ENCODE measurements at regions of chr16 and their contacts with region 1.

Region 1: DNA sequence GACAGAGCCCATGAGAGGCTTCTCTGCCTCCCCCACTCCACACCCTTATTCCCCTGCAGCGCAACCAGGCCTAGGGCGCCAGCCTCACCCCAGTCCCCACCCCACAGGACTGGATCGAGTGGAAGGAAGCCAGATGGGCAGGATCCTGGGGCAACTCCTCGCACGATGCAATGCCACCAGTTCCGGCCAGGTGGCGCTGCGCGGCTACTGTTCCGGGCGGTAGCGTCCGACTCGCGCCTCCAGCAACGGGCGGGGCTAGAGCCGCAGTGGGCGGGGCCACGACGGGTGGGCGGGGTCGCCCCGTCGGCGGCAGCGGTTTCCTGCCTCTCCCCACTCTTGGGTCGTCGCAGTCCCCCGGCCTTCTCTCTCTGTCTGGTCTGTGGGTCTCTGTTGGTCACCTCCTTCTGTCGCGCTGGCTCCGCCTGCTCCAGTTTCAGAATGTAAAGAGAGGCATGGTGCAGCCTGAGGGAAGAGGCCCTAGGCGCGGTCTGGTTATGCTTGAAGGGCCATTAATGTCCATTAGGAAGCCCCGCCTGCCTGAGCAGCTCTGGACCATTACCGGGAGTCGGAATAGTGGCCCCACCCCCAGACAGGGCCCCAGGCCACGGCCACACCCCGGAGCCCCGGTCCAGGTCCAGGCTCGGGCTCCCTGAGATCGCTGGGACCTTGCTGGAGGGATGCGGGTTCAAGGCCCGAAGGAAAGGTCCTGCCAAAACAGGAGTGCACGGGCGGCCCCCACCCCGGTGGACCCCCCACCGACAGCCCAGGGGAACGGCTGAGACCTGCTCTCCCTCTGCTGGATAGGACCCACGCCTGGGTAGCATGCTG is 3.4 kb upstream of the NHERF2 start:
- DNase-seq: peak; percentile 98
- CTCF ChIP-seq: peak; percentile 95

Region 2: GRCh38 chr16:1909561-1910231 is 113.6 kb before region 1 on chr16:
- CTCF ChIA-PET with region 1: no interaction called
- POLR2A ChIA-PET with region 1: no interaction called
- DNase-seq: no peak
- CTCF ChIP-seq: no peak

Region 3: GRCh38 chr16:2047330-2048115 is 24.2 kb after region 1 on chr16 and contains the starts of genes NTHL1 and TSC2:
- CTCF ChIA-PET with region 1: interaction called, 23 read pairs
- POLR2A ChIA-PET with region 1: no interaction called
- DNase-seq: peak; percentile 98
- CTCF ChIP-seq: no peak

Region 4: DNA sequence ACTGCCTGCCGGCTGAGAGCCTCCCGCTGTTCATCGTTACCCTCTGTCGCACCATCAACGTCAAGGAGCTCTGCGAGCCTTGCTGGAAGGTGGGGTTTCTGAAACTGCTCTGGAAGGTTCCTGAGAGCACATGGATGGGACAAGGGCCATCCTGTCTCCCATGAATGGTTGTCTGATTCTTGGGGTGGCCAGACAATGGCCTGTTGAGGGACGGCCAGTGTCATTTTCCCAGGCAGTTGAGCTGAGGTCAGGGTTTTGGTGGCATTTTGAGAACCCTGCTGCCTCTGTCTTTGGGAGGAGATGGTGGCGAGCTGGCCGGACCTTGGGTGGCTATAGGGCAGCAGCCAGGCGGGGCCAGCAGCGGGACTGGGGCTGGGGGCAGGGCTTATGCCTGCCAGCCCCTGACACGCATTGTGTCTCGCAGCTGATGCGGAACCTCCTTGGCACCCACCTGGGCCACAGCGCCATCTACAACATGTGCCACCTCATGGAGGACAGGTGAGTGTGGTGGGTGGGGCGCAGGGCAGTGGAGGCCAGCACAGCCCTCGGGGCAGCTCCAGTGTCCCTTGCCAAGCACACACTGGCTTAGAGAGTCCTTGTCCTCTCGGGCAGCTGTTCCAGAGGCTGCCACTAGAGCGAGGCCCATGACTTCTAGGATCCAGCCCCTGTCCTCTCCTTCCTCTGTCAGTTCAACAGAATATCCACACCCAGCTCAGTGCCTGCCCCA is 33.5 kb after region 1 on chr16:
- CTCF ChIA-PET with region 1: interaction called, 13 read pairs
- POLR2A ChIA-PET with region 1: no interaction called
- DNase-seq: no peak
- CTCF ChIP-seq: no peak

Region 5: GRCh38 chr16:2194852-2195321 is 171.6 kb after region 1 on chr16:
- CTCF ChIA-PET with region 1: no interaction called
- POLR2A ChIA-PET with region 1: no interaction called
- DNase-seq: peak; percentile 75
- CTCF ChIP-seq: peak; percentile 55